Heart left ventricle (tissue), 16 donors: ENCODE measurements at regions of chr10 and their contacts with region 1.

Region 1: DNA sequence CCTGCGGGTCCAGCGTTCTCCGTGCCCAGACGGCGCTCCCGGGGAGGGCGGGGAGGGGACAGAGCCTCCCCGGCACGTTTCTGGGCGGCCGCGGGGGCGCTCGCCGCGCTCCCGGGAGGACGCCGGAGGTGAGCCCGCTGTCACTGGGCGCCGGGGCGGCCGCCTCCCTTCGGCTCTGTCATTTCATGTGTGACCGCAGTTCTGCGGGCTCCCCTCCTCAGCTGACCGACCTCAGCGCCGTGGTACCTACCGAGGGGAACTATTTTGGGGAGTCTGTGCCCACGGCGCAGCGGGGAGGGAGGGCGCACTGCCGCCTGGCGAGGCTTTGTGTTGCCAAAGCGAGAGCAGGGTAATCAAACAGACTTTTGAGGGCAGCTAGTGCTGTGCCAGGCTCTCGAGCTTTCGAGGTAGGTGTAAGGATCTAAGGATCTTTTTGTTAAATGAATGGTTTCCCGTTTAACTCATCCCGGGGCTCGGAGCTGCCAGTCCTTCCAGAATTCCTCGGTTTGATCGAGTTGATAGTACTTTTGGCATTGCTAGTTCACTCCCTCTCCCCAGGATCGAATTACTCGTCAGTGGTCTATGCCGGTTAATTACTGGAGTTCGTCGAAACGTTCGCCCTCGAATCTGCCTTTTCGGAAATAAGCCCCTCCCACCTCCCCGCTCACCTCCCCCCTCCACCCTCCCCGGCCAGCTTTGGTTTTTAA is 1.9 kb downstream of the ARID5B start:
- DNase-seq: peak; percentile 55 to 83 (median 63)
- ATAC-seq: peak; percentile 43 to 86 (median 76)
- H3K4me3 ChIP-seq: peak overlapping the region; percentile 61 to 92 (median 82)
- H3K27ac ChIP-seq: peak overlapping the region; percentile 89 to 100 (median 94)
- H3K4me1 ChIP-seq: peaks cover 0 to 41% (median 17%) of the 10 kb centered on the region in 12 donors
- H3K27me3 ChIP-seq: no peaks in the 10 kb centered on the region
- CTCF ChIP-seq: peak in 9 of 12 donors; percentile 7 to 46 (median 32)
- POLR2A ChIP-seq: peak in 1 of 2 donors; percentile 38

Region 2: GRCh38 chr10:61943674-61944410 is 40.5 kb after region 1 on chr10:
- intact Hi-C with region 1: loop called in 2 of 10 experiments (anchors 5 kb)
- DNase-seq: no peak
- ATAC-seq: peak in 2 of 4 donors; percentile 68 to 72
- H3K4me3 ChIP-seq: peak overlapping the region in 8 of 12 donors; percentile 4 to 30 (median 18)
- H3K27ac ChIP-seq: peak overlapping the region; percentile 7 to 87 (median 61)
- H3K4me1 ChIP-seq: peaks cover 0 to 57% (median 14%) of the 10 kb centered on the region in 12 donors
- H3K27me3 ChIP-seq: no peaks in the 10 kb centered on the region
- CTCF ChIP-seq: peak in 5 of 12 donors; percentile 13 to 41 (median 26)
- POLR2A ChIP-seq: no peak

Region 3: GRCh38 chr10:61974601-61975390 is 71.4 kb after region 1 on chr10:
- intact Hi-C with region 1: loop called in 5 of 10 experiments (anchors 5 to 10 kb)
- DNase-seq: peak in 4 of 5 donors; percentile 65 to 86 (median 73)
- ATAC-seq: peak in 3 of 4 donors; percentile 39 to 68 (median 66)
- H3K4me3 ChIP-seq: peak overlapping the region in 2 of 12 donors; percentile 4 to 10
- H3K27ac ChIP-seq: peak overlapping the region in 11 of 12 donors; percentile 41 to 79 (median 66)
- H3K4me1 ChIP-seq: peaks cover 6 to 60% (median 48%) of the 10 kb centered on the region in 12 donors
- H3K27me3 ChIP-seq: no peaks in the 10 kb centered on the region
- CTCF ChIP-seq: no peak
- POLR2A ChIP-seq: no peak

Region 4: GRCh38 chr10:61992671-61993668 is 89.6 kb after region 1 on chr10:
- intact Hi-C with region 1: loop called in 3 of 10 experiments (anchors 5 to 10 kb)
- DNase-seq: peak in 4 of 5 donors; percentile 49 to 67 (median 58)
- ATAC-seq: peak; percentile 95 to 97 (median 96)
- H3K4me3 ChIP-seq: peak overlapping the region in 9 of 12 donors; percentile 15 to 42 (median 31)
- H3K27ac ChIP-seq: peak overlapping the region; percentile 18 to 96 (median 71)
- H3K4me1 ChIP-seq: peaks cover 0 to 59% (median 30%) of the 10 kb centered on the region in 12 donors
- H3K27me3 ChIP-seq: no peaks in the 10 kb centered on the region
- CTCF ChIP-seq: no peak
- POLR2A ChIP-seq: no peak

Region 5: DNA sequence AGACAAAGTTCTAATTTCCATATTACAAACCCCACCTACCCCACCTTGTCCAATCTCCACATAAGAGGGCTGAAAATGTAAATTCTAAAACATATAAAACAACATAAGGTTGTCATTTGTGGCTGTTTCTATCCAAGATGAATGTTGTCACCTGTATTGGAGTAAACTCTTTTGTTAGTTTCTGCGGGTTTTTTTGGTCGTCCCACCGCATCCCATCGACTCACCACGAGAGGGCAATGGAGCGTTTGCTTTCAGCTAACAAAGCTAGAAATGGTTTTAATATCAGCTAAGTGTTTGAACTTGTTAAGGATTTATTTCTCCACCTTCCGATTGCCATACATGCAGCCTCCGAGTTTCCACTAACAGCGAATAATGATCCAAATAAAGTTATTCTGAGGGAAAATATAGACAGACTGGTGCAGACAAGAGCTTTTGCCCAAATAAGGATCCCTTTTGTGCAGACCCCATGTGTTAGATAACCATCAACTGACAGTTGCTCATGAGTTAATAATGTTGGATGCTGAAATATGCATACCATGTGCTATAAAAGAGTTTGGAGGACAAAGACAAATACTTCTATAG is 135.3 kb after region 1 on chr10:
- intact Hi-C with region 1: loop called in 9 of 10 experiments (anchors 1 to 10 kb)
- DNase-seq: peak; percentile 73 to 79 (median 74)
- ATAC-seq: peak in 3 of 4 donors; percentile 64 to 78 (median 74)
- H3K4me3 ChIP-seq: peak overlapping the region in 7 of 12 donors; percentile 20 to 46 (median 35)
- H3K27ac ChIP-seq: peak overlapping the region in 7 of 12 donors; percentile 22 to 69 (median 33)
- H3K4me1 ChIP-seq: peaks cover 0 to 58% (median 26%) of the 10 kb centered on the region in 12 donors
- H3K27me3 ChIP-seq: no peaks in the 10 kb centered on the region
- CTCF ChIP-seq: peak; percentile 74 to 96 (median 85)
- POLR2A ChIP-seq: no peak

Region 6: DNA sequence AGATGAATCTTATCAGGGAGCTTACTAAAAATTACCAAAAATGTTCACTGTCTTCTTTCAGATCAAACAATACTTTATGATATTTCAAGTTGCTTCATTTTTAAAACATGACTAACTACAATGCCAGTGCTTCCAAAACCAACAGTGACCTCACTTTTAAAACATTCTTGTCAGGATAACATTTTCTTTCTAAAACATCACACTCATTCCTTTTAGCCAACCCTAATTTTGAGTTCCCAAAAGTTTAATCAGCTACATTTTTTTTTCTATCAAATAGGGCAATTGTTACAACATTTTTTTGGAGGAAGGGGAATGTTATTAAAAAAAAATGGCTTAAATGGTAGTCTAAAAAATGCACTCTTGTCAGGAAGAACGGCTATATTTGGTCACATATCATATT is 328.0 kb after region 1 on chr10:
- intact Hi-C with region 1: no loop called
- DNase-seq: no peak
- ATAC-seq: peak in 2 of 4 donors; percentile 47 to 74
- H3K4me3 ChIP-seq: no peak overlapping the region
- H3K27ac ChIP-seq: peak overlapping the region in 4 of 12 donors; percentile 19 to 49 (median 40)
- H3K4me1 ChIP-seq: peaks cover 0 to 14% (median 2%) of the 10 kb centered on the region in 12 donors
- H3K27me3 ChIP-seq: no peaks in the 10 kb centered on the region
- CTCF ChIP-seq: no peak
- POLR2A ChIP-seq: no peak